ENCODE measurements at regions of chr3 and their contacts with region 1.

Region 1: GRCh38 chr3:154142608-154143007 is 21.4 kb downstream of the ARHGEF26 start:
- DNase-seq: no peak
- H3K4me3 ChIP-seq: no peak overlapping the region
- H3K27ac ChIP-seq: no peak overlapping the region
- H3K4me1 ChIP-seq: no peaks in the 10 kb centered on the region; the same call in 1 of the 2 replicates
- H3K27me3 ChIP-seq: no peaks in the 10 kb centered on the region
- CTCF ChIP-seq: no peak

Region 2: GRCh38 chr3:154323891-154324738 is 181.5 kb after region 1 on chr3 and contains the start of gene DHX36:
- CTCF ChIA-PET with region 1: no interaction called
- POLR2A ChIA-PET with region 1: no interaction called
- intact Hi-C with region 1: no loop called
- DNase-seq: peak; percentile 73 to 79
- H3K4me3 ChIP-seq: peak within 1 kb of the TSS; percentile 75
- H3K27ac ChIP-seq: peak within 1 kb of the TSS; percentile 71
- H3K4me1 ChIP-seq: peaks cover 28% of the 10 kb centered on the region
- H3K27me3 ChIP-seq: no peaks in the 10 kb centered on the region
- CTCF ChIP-seq: no peak; the same call in 1 of the 2 replicates
- total RNA-seq, gene DHX36: 64.2 and 87.2 TPM in 2 replicates

Region 3: GRCh38 chr3:155382396-155383042 is 1239.9 kb after region 1 on chr3:
- CTCF ChIA-PET with region 1: interaction called, 11 read pairs
- POLR2A ChIA-PET with region 1: no interaction called
- intact Hi-C with region 1: no loop called
- DNase-seq: peak; percentile 43 to 64
- H3K4me3 ChIP-seq: no peak overlapping the region
- H3K27ac ChIP-seq: no peak overlapping the region
- H3K4me1 ChIP-seq: no peaks in the 10 kb centered on the region
- H3K27me3 ChIP-seq: no peaks in the 10 kb centered on the region
- CTCF ChIP-seq: peak; percentile 91